ENCODE measurements at regions of chr5 and their contacts with region 1.

Region 1: DNA sequence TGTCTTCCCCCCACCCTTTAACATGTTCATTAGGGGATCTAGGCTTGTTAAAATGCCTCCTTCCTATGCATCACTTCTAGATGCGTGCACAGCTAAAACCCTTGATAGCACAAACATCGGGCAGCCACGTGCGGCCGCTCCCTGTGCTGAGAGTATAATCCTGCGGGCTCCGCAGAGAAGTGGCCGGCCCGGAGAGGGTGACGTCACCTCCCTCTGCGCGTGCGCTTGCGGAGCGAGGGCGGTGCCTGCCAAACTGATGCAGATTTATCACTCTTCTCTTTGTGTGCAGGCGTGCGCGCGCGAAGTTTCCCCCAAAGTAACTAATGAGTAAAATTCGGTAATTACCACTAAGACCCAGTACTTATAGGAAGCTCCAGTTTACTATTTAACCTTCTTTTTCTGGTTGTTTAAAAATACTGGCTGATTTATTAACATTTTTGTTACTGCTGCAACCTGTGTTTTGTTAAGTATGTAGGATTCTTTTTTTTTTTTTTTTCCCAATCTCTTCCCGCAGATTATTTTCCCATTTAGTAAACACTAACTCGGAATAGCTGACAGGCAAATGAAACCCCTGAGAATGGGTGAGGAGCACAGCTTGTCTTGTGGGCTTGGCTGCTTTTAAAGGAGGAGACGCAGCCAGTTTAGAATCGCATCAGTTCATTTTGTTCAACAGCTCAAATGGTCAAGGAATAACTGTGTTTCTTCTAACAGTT is 121.6 kb downstream of the TRIO start:
- DNase-seq: peak; percentile 97
- H3K4me3 ChIP-seq: peak overlapping the region; percentile 17 to 34 (median 32)
- H3K27ac ChIP-seq: peak overlapping the region; percentile 57 to 70 (median 64)
- H3K4me1 ChIP-seq: peaks cover 54 to 83% (median 76%) of the 10 kb centered on the region in 4 donors
- H3K27me3 ChIP-seq: no peaks in the 10 kb centered on the region
- CTCF ChIP-seq: no peak
- EP300 ChIP-seq: no peak
- POLR2A ChIP-seq: no peak

Region 2: GRCh38 chr5:14218897-14219580 is 45.7 kb before region 1 on chr5:
- intact Hi-C with region 1: loop called (anchors 5 kb)
- DNase-seq: no peak
- H3K4me3 ChIP-seq: peak overlapping the region in 2 of 4 donors; percentile 11 to 15
- H3K27ac ChIP-seq: peak overlapping the region; percentile 70 to 81 (median 72)
- H3K4me1 ChIP-seq: peaks cover 64 to 83% (median 72%) of the 10 kb centered on the region in 4 donors
- H3K27me3 ChIP-seq: no peaks in the 10 kb centered on the region
- CTCF ChIP-seq: no peak
- EP300 ChIP-seq: no peak
- POLR2A ChIP-seq: no peak